ENCODE measurements at regions of chrX and their contacts with region 1.

Region 1: DNA sequence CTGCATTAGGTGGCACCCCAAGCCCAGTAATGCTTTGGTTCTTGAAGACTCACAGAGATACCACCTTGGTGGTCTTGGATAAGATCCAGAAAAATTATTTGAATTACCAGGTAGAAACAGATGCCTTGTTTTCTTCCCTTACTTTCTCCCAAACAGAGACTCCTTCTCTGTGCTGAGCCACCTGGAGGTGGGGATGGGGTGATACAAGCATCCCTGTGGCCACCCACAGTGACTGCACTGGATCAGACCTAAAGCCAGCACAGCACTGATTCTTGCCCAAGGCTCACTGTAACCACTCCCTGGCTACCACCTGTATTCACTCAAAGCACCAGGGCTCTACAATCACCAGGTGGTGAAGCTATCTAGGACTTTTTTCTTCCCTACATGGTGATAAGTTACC is 156.8 kb downstream of the TEX13A start:
- DNase-seq: no peak
- ATAC-seq: no peak
- H3K4me3 Mint-ChIP-seq: no peak overlapping the region
- H3K27ac Mint-ChIP-seq: no peak overlapping the region
- H3K4me1 Mint-ChIP-seq: no peaks in the 10 kb centered on the region
- H3K27me3 Mint-ChIP-seq: no peaks in the 10 kb centered on the region
- CTCF ChIP-seq: no peak

Region 2: GRCh38 chrX:104833401-104833800 is 230.3 kb before region 1 on chrX:
- CTCF ChIA-PET with region 1: no interaction called
- POLR2A ChIA-PET with region 1: no interaction called
- intact Hi-C with region 1: no loop called
- DNase-seq: no peak
- ATAC-seq: no peak
- H3K4me3 Mint-ChIP-seq: no peak overlapping the region
- H3K27ac Mint-ChIP-seq: no peak overlapping the region
- H3K4me1 Mint-ChIP-seq: no peaks in the 10 kb centered on the region
- H3K27me3 Mint-ChIP-seq: no peaks in the 10 kb centered on the region
- CTCF ChIP-seq: no peak

Region 3: GRCh38 chrX:104935581-104935980 is 128.2 kb before region 1 on chrX:
- CTCF ChIA-PET with region 1: no interaction called
- POLR2A ChIA-PET with region 1: no interaction called
- intact Hi-C with region 1: no loop called
- DNase-seq: no peak
- ATAC-seq: no peak
- H3K4me3 Mint-ChIP-seq: no peak overlapping the region
- H3K27ac Mint-ChIP-seq: no peak overlapping the region
- H3K4me1 Mint-ChIP-seq: no peaks in the 10 kb centered on the region
- H3K27me3 Mint-ChIP-seq: no peaks in the 10 kb centered on the region
- CTCF ChIP-seq: no peak

Region 4: GRCh38 chrX:105120463-105120862 is 56.7 kb after region 1 on chrX:
- CTCF ChIA-PET with region 1: no interaction called
- POLR2A ChIA-PET with region 1: no interaction called
- intact Hi-C with region 1: loop called (anchors 10 kb)
- DNase-seq: no peak
- ATAC-seq: no peak
- H3K4me3 Mint-ChIP-seq: no peak overlapping the region
- H3K27ac Mint-ChIP-seq: no peak overlapping the region
- H3K4me1 Mint-ChIP-seq: no peaks in the 10 kb centered on the region
- H3K27me3 Mint-ChIP-seq: no peaks in the 10 kb centered on the region
- CTCF ChIP-seq: no peak